Endothelial cell of umbilical vein (primary cell): ENCODE measurements at regions of chr3 and their contacts with region 1.

Region 1: DNA sequence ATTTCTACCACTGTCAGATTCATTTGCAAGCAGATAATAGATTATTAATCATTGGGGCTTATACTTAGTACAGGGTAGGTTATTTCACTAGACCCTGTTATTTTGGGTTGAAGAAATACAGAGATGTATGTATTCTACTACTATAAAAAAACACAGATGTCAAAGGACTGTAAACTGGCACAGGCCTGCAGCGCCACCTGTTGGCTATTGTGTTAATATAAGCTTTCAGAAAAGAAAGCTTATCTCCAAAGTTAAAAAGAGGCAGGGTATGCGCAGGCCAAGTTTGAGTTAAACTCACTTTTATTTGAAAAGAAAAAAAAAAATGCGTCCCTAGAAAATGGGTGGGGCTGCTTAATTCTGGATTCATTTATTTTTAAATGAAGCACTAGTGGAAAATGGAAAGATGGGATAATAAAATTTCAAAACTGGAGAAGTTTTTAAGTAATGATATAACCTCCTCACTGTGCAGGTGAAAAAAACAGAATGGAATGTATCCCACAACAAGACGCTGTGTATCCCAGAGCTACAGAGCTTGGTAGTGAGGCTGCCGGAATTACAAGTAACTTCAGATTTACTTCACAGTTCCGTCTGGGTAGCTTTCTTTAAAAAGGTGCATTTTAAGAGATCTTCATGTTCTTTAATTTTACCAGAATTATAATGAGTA is 407.2 kb upstream of the TGFBR2 start:
- DNase-seq: peak; percentile 78
- H3K4me3 ChIP-seq: no peak overlapping the region
- H3K27ac ChIP-seq: no peak overlapping the region
- H3K4me1 ChIP-seq: peaks cover 17% of the 10 kb centered on the region
- H3K27me3 ChIP-seq: no peaks in the 10 kb centered on the region
- CTCF ChIP-seq: peak; percentile 50 to 55
- POLR2A ChIP-seq: no peak

Region 2: GRCh38 chr3:28388978-28389377 is 1810.2 kb before region 1 on chr3:
- CTCF ChIA-PET with region 1: no interaction called
- POLR2A ChIA-PET with region 1: no interaction called
- dilution Hi-C with region 1: no loop called
- intact Hi-C with region 1: no loop called
- DNase-seq: no peak
- H3K4me3 ChIP-seq: no peak overlapping the region
- H3K27ac ChIP-seq: no peak overlapping the region
- H3K4me1 ChIP-seq: no peaks in the 10 kb centered on the region
- H3K27me3 ChIP-seq: no peaks in the 10 kb centered on the region
- CTCF ChIP-seq: no peak
- POLR2A ChIP-seq: no peak

Region 3: GRCh38 chr3:28916713-28917499 is 1282.3 kb before region 1 on chr3:
- CTCF ChIA-PET with region 1: interaction called, 11 read pairs
- POLR2A ChIA-PET with region 1: no interaction called
- dilution Hi-C with region 1: no loop called
- intact Hi-C with region 1: loop called (anchors 1 kb)
- DNase-seq: peak; percentile 96
- H3K4me3 ChIP-seq: peak overlapping the region; percentile 3 to 73 (median 45)
- H3K27ac ChIP-seq: peak overlapping the region; percentile 57
- H3K4me1 ChIP-seq: peaks cover 9% of the 10 kb centered on the region
- H3K27me3 ChIP-seq: no peaks in the 10 kb centered on the region
- CTCF ChIP-seq: peak; percentile 65 to 71
- POLR2A ChIP-seq: no peak

Region 4: DNA sequence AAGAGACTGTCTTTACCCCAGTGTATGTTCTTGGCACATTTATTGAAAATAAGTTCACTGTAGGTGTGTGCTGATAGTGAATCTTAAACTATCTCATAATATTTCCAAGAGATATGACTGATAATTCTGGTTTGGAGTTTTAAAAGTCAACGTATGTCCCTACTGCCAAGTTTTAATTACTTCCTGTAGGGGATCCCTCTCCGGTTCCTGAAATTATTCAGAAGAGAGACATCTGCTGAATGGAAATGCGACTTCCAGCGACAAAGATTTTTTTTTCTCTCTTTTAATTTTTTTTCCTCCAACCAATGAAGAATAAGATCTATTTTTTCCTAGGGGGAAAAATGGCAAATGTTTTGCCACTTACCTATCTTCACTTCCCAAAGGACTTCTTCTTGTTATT is 91.7 kb before region 1 on chr3:
- CTCF ChIA-PET with region 1: interaction called, 142 read pairs
- POLR2A ChIA-PET with region 1: no interaction called
- dilution Hi-C with region 1: no loop called
- intact Hi-C with region 1: no loop called
- DNase-seq: no peak
- H3K4me3 ChIP-seq: no peak overlapping the region
- H3K27ac ChIP-seq: no peak overlapping the region
- H3K4me1 ChIP-seq: no peaks in the 10 kb centered on the region
- H3K27me3 ChIP-seq: peaks cover 0 to 2% of the 10 kb centered on the region in 2 experiments
- CTCF ChIP-seq: no peak
- POLR2A ChIP-seq: no peak

Region 5: DNA sequence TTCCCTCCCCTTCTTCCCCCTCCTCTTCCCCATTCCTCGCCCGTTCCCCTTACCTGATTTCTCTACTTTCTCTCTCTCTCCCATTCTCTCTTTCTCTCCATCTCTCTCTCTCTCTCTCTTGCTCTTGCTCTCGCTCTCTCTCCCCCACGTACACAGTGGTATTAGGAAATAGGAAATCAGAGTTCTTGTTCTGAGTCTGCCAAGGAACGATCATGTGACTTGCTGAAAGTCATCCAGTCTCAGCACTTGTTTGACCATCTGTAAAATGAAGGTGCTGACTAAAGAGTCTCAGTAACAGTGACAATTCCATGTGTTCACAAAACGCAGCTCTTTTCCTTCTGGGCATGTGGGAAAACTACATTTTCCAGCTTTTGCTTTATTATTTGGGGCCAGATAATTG is 37.9 kb before region 1 on chr3:
- CTCF ChIA-PET with region 1: interaction called, 21 read pairs
- POLR2A ChIA-PET with region 1: no interaction called
- dilution Hi-C with region 1: no loop called
- intact Hi-C with region 1: no loop called
- DNase-seq: peak; percentile 27
- H3K4me3 ChIP-seq: no peak overlapping the region
- H3K27ac ChIP-seq: no peak overlapping the region
- H3K4me1 ChIP-seq: peaks cover 30% of the 10 kb centered on the region
- H3K27me3 ChIP-seq: peaks cover 0 to 7% of the 10 kb centered on the region in 2 experiments
- CTCF ChIP-seq: no peak
- POLR2A ChIP-seq: no peak

Region 6: GRCh38 chr3:30227571-30228301 is 28.5 kb after region 1 on chr3:
- CTCF ChIA-PET with region 1: interaction called, 30 read pairs
- POLR2A ChIA-PET with region 1: no interaction called
- dilution Hi-C with region 1: no loop called
- intact Hi-C with region 1: no loop called
- DNase-seq: peak; percentile 90
- H3K4me3 ChIP-seq: no peak overlapping the region
- H3K27ac ChIP-seq: peak overlapping the region; percentile 67
- H3K4me1 ChIP-seq: peaks cover 26% of the 10 kb centered on the region
- H3K27me3 ChIP-seq: no peaks in the 10 kb centered on the region
- CTCF ChIP-seq: no peak
- POLR2A ChIP-seq: no peak

Region 7: GRCh38 chr3:30511524-30512278 is 312.5 kb after region 1 on chr3:
- CTCF ChIA-PET with region 1: interaction called, 10 read pairs
- POLR2A ChIA-PET with region 1: no interaction called
- dilution Hi-C with region 1: no loop called
- intact Hi-C with region 1: no loop called
- DNase-seq: peak; percentile 64
- H3K4me3 ChIP-seq: no peak overlapping the region
- H3K27ac ChIP-seq: peak overlapping the region; percentile 72
- H3K4me1 ChIP-seq: peaks cover 49% of the 10 kb centered on the region
- H3K27me3 ChIP-seq: no peaks in the 10 kb centered on the region
- CTCF ChIP-seq: no peak
- POLR2A ChIP-seq: no peak

Region 8: DNA sequence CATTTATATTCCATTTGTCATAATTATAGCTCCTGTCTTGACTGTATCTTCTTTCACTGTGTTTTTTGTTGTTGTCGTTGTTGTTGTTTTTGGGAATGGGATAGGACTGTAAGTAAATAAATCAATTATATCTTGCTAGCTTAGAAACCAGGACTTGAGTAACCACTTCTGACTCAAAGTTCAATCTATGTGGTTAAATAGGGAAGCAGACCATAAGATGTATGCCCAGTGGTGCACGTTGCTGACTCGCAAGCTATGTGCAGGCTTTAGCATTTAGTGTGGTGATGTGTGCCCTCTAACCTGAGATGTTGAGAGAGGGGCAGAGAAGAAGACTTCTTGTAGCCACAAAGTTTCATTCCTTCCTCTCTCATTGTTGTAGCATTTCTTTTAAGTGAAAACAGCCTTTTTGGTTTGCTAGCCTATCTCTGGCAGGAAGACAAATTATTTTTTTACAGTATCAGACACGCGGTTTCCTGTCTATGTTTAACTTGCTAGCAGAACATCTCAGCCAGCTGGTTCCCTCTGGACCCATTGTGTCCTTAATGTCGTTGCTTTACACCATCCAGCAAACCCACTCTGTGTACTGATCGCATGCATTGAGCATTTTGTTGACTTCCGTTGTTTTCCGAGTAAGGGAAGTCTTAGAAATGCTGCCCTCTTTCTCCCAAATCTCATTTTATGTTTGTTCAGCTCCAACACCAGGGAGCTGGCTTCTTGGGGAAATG is 459.3 kb after region 1 on chr3:
- CTCF ChIA-PET with region 1: interaction called, 12 read pairs
- POLR2A ChIA-PET with region 1: interaction called, 3 read pairs
- dilution Hi-C with region 1: no loop called
- intact Hi-C with region 1: no loop called
- DNase-seq: peak; percentile 95
- H3K4me3 ChIP-seq: no peak overlapping the region
- H3K27ac ChIP-seq: peak overlapping the region; percentile 98
- H3K4me1 ChIP-seq: peaks cover 100% of the 10 kb centered on the region
- H3K27me3 ChIP-seq: no peaks in the 10 kb centered on the region
- CTCF ChIP-seq: no peak
- POLR2A ChIP-seq: peak; percentile 68